Activated T-helper 1 cell treated with anti-CD3 and anti-CD28 coated beads, Interleukin-12 subunit alpha, Interleukin-12 subunit beta, Interleukin-2, Interleukin-4 antibody, amounts not matched to agents 30 ng/mL and 10 ng/mL and 1 ng/mL, durations not matched to agents 14 hours and 24 hours and 36 hours (primary cell): ENCODE measurements at regions of chr1 and their contacts with region 1.

Region 1: DNA sequence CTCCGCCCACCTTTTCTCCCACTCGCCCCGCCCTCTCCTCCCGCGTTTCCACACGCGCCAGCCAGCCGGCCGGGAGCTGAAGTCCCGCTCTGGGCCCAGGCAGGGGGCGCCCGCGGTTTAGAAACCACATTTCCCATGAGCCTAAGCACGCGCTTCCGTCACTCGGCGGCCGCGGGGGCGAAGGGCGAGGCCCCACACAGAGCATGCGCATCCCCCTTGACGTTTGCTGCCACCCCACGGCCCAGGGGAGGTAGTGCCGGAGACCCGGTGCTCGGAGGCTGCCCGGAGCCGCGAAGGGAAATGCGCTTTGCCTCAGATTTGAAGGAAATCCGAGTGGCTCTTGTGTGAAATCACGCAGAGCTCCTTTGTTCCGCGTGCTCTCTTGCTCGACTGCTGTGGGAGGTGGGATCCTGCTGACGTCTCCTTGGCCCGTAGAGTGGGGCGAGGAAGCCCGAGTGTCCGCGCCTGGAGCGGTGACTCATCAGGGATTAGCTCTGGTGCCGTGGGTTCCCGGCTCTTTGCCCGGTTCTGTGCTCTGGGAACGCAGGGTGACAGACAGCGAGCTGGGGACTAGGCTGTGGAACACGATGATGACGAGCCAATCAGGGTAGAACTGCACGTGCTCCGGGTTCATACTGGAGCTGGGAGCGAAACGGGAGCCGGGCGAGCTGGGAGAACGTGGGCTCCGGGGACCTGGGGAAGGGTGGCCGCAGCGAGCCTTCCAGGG is 407 bp upstream of the B3GALNT2 start:
- DNase-seq: peak; percentile 98
- H3K4me3 Mint-ChIP-seq: peak overlapping the region; percentile 92
- H3K27ac Mint-ChIP-seq: peak overlapping the region; percentile 97
- H3K4me1 Mint-ChIP-seq: peaks cover 41% of the 10 kb centered on the region
- H3K27me3 Mint-ChIP-seq: peaks cover 16% of the 10 kb centered on the region

Region 2: DNA sequence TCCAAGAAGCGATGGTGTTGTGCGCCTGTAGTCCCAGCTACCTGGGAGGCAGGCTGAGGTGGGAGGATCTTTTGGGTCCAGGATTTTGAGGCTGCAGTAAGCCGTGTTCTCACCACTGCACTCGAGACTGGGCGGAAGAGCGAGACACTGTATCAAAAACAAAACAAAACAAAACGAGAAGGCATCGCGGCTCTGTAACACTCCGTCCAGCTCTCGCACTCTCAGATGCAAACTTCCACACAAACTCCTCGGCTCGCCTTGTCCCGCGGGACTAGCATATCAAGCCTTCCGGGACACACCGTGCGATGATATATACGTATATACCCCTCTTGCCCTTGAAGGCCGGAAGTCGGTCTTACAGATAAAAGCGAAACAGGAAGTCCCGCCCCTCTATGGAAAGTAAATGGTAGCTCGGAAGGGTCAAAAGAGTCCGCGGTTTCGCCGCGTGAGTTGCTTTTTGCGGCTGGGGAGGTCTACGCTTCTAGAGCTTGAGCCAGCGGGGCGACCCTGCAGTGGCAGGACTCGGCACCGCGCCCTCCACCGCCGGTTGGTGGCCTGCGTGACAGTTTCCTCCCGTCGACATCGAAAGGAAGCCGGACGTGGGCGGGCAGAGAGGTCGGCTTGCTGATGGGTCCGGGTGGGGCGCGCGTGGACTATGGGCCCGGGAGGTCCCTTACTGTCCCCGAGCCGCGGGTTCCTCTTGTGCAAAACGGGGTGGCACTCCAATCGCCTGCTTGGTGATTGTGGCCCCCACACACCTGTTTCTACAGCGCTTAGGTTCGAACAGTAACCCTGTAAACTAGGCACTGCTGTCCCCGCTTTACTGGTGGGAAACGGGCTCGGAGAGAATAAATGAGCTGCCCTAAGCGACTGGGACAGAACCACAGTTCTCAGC is 1131.3 kb before region 1 on chr1 and contains the start of gene COA6:
- intact Hi-C with region 1: loop called (anchors 1 kb)
- DNase-seq: peak; percentile 85
- H3K4me3 Mint-ChIP-seq: peak within 1 kb of the TSS; percentile 97
- H3K27ac Mint-ChIP-seq: peak within 1 kb of the TSS; percentile 96
- H3K4me1 Mint-ChIP-seq: peaks cover 57% of the 10 kb centered on the region
- H3K27me3 Mint-ChIP-seq: peaks cover 2% of the 10 kb centered on the region
- total RNA-seq, gene COA6: 57.2 and 66.9 TPM in 2 replicates

Region 3: DNA sequence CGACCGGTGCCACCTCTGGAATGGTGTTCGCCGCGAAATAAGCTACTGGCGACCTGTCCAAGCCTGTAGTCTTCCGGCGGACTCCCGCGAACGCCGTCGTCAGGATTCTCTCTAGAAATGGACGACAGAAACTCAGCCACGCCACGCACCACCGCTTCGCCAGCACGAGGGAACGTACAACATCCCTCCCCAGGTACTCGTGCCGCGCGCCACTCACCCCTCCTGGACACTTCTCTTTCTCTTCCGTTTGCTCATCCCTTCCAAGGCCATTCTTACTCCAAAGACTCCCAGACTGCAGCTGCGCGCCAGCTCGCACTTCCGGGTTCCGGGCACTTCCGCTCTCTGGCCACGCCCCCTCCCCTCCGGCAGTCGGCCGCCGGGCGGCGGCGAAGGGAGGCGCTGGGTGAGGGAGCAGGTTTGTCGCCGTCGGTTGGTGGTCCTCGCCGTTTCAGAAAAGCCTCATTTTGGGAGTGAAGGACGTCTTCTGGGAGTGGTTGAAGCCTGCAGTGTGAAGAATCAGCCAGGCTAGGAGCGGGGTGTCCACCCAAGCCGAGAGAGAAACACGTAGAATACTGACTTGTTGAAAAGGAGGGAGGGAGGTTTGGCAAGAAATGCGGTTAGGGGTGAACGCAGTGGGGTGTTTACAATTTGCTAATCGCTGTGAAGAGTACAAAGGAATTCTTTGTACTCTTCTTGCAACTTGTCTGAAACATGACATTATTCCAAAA is 343.5 kb before region 1 on chr1 and contains the start of gene RBM34:
- intact Hi-C with region 1: loop called (anchors 2 kb)
- DNase-seq: peak; percentile 92
- H3K4me3 Mint-ChIP-seq: peak within 1 kb of the TSS; percentile 98
- H3K27ac Mint-ChIP-seq: peak within 1 kb of the TSS; percentile 97
- H3K4me1 Mint-ChIP-seq: peaks cover 16% of the 10 kb centered on the region
- H3K27me3 Mint-ChIP-seq: no peaks in the 10 kb centered on the region
- total RNA-seq, gene RBM34: 120 and 127 TPM in 2 replicates

Region 4: GRCh38 chr1:235336903-235337302 is 167.8 kb before region 1 on chr1:
- intact Hi-C with region 1: no loop called
- DNase-seq: peak; percentile 21
- H3K4me3 Mint-ChIP-seq: peak overlapping the region; percentile 49
- H3K27ac Mint-ChIP-seq: peak overlapping the region; percentile 71
- H3K4me1 Mint-ChIP-seq: peaks cover 14% of the 10 kb centered on the region
- H3K27me3 Mint-ChIP-seq: no peaks in the 10 kb centered on the region

Region 5: DNA sequence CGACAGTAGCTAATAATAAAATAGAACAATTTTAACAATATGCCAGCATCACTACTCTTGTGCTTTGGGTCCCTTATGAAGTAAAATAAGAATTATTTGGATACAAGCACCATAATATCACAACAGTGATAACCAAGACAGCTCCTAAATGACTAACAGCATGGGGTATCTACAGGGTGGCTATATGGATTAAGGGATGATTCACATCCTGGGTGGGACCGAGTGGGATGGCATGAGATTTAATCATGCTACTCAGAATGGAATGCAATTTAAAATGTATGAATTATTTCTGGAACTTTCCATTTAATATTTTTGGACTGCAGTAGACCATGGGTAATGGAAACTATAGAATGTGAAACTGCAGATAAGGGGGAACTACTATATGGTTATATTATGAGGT is 27.7 kb after region 1 on chr1:
- intact Hi-C with region 1: no loop called
- DNase-seq: no peak
- H3K4me3 Mint-ChIP-seq: no peak overlapping the region
- H3K27ac Mint-ChIP-seq: no peak overlapping the region
- H3K4me1 Mint-ChIP-seq: no peaks in the 10 kb centered on the region
- H3K27me3 Mint-ChIP-seq: peaks cover 6% of the 10 kb centered on the region

Region 6: GRCh38 chr1:235642011-235642942 is 137.6 kb after region 1 on chr1:
- intact Hi-C with region 1: loop called (anchors 1 kb)
- DNase-seq: peak; percentile 76
- H3K4me3 Mint-ChIP-seq: peak overlapping the region; percentile 67
- H3K27ac Mint-ChIP-seq: peak overlapping the region; percentile 92
- H3K4me1 Mint-ChIP-seq: peaks cover 71% of the 10 kb centered on the region
- H3K27me3 Mint-ChIP-seq: peaks cover 17% of the 10 kb centered on the region

Region 7: DNA sequence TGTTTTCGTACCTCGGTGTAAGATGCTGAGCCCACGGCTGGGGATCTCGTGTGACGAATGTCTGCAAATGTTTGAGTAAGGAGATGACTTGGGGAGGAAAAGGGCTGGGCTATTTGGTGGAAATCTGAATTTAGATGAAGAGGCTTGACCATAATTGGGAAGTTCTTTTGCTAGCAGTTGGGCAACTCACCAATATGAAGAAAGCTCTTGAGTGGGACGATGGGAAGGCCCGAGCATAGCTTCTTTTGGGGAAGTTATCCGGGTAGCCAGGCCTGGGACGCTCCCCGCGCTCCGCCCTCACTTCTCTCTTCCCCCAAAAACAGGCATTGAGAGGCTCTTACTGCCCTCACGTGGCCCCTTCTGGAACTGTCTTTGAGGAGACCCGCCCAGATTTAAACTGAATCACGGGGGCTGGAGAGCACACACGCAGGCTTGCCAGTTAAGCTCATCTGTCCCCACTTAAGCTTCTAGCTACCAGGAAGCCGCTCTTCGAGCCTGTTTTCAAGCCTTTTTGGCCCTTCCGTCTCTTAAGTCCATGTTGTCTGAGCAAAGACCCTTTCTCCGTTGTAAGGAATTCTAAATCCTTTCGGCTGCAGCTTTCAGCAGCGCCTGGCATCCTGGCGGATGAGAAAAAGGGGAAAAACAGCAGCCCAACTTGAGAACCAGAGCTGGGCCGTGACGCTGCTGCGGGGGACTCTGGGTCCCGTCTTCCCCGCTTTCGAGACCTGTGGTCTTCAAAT is 467.1 kb after region 1 on chr1:
- intact Hi-C with region 1: loop called (anchors 2 kb)
- DNase-seq: peak; percentile 80
- H3K4me3 Mint-ChIP-seq: peak overlapping the region; percentile 79
- H3K27ac Mint-ChIP-seq: peak overlapping the region; percentile 84
- H3K4me1 Mint-ChIP-seq: peaks cover 17% of the 10 kb centered on the region
- H3K27me3 Mint-ChIP-seq: peaks cover 11% of the 10 kb centered on the region

Region 8: DNA sequence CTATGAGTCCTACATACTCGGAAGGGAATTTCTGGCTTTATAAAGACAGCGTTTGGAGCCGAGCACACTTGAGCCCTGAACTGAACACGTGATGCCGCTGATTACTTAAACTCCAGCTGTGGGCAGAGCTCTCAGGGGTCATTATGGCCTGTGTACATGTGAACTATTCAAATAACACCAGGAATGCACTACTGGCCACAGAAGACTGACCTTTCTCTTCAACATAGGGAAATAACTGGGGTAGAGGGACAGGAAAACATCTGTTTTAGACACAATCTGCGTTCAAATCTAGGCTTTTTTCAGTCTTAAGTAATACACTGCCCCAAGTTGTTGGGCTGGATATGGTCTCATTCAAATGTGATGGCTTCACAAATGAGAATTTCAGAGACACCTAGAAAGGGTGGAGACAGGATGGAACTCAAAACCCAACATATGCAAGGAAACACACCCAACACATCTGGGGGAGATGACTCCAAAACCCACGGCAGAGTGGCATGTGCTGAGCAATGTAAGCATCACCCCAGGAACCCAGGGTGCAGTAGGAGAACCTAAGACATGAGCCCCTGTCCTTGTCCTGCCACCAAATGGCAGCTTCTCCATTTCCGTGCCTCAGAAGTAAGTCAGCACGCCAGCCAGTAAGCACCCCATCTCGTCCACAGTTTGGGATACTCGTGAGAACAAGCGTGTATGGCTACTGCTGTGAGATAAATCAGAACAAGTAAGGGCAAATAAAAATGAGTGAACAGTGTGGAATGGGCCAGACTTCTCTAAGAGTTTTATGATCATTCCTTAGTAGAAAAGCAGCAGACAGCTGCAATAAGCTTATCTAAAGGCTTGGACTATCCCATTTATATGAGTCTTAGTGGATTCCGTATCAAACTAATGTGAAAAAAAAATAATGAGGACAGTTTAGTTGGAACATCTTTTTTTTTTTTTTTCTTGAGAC is 535.4 kb after region 1 on chr1:
- intact Hi-C with region 1: no loop called
- DNase-seq: no peak
- H3K4me3 Mint-ChIP-seq: no peak overlapping the region
- H3K27ac Mint-ChIP-seq: no peak overlapping the region
- H3K4me1 Mint-ChIP-seq: no peaks in the 10 kb centered on the region
- H3K27me3 Mint-ChIP-seq: peaks cover 43% of the 10 kb centered on the region

Region 9: GRCh38 chr1:236523701-236524141 is 1019.1 kb after region 1 on chr1 and contains the start of gene LGALS8:
- intact Hi-C with region 1: loop called (anchors 10 kb)
- DNase-seq: peak; percentile 78
- H3K4me3 Mint-ChIP-seq: peak within 1 kb of the TSS; percentile 99
- H3K27ac Mint-ChIP-seq: peak within 1 kb of the TSS; percentile 100
- H3K4me1 Mint-ChIP-seq: peaks cover 36% of the 10 kb centered on the region
- H3K27me3 Mint-ChIP-seq: no peaks in the 10 kb centered on the region
- total RNA-seq, gene LGALS8: 56.6 and 66.2 TPM in 2 replicates